ENCODE measurements at regions of chr17 and their contacts with region 1.

Region 1: DNA sequence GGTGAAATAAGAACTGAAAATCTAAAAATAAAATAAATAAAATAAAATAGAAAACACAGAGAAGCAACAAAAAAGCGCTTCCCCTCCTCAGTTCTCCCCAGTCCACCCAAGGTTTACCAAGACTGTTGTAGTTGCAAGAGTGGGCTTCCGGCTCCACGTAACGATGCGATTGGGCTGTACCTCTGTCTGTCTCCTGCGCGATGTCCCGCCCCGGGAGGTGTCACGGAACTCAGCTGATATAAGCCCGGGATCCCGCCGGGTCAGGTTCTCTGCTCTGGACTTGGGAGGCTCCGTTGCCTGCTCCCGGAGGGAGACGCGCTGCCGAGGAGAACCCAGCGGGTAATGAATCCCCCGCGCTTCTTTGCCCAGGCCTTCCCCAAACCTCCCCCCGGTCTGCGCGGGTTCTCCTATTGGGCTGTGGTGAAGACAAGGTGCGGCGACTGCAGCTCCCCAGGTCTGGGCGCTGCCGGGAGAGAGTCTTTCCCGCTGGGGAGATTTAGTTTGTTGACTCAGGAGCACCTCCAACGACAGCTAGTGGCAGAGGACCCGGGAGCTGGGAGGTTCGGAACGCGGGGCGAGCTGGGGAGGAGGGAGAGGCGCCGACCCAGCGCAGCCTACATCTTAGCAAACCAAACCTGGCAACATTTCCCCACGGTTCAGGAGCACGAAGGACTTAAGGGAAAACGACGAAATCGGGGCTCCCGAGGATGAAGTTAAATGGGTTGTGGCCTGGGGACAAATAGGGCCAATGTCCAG is at the start of gene SLFN5:
- DNase-seq: peak; percentile 98
- H3K4me3 Mint-ChIP-seq: peak within 1 kb of the TSS; percentile 93
- H3K27ac Mint-ChIP-seq: peak within 1 kb of the TSS; percentile 95
- H3K4me1 Mint-ChIP-seq: peaks cover 71% of the 10 kb centered on the region
- H3K27me3 Mint-ChIP-seq: no peaks in the 10 kb centered on the region
- total RNA-seq, gene SLFN5: 6.9 and 8.9 TPM in 2 replicates

Region 2: DNA sequence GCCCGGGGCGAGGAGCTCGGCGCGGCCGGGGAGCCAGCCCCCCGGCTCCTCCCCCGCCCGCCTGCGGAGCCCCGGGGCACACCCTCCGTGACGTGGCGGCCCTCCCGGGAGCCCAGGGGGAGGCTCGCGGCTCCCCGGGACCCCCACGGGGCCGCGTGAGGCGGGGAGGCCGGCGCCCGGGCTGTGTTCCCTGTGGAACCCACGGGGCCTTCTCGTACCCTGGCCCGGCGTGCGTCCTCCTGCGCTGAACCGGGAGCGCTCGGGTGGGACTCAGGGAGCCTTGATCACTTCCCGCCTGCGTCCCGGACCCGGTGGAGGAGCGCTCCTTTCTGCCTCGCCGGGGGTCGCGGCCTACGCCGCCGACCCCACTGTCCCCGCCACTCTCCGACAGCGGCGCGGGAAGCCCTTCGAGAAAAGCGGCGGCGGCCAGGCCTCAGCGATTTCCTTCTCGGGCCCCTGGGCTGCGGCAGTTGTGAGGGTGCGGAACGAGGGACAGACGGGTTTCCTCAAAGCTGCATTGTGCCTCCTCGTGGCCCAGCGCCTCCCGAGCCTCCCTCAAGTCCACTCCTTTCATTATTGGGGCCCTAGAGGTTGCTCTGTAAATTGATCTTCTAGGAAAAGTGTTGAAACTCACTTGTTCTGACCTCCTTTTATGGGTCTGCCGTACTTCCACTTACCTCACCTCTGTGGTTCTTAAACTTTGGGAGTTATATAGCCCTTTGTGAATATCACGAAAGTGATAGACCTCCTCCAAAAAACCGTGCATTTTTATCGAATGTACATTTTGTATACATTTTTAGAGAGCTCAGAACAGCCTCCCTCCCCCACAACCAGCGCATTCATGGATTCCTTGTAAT is 262.1 kb before region 1 on chr17:
- intact Hi-C with region 1: loop called (anchors 5 kb)
- DNase-seq: peak; percentile 95
- H3K4me3 Mint-ChIP-seq: peak overlapping the region; percentile 96
- H3K27ac Mint-ChIP-seq: peak overlapping the region; percentile 96
- H3K4me1 Mint-ChIP-seq: peaks cover 47% of the 10 kb centered on the region
- H3K27me3 Mint-ChIP-seq: no peaks in the 10 kb centered on the region

Region 3: GRCh38 chr17:35148144-35148543 is 94.8 kb before region 1 on chr17:
- intact Hi-C with region 1: no loop called
- DNase-seq: no peak
- H3K4me3 Mint-ChIP-seq: no peak overlapping the region
- H3K27ac Mint-ChIP-seq: no peak overlapping the region
- H3K4me1 Mint-ChIP-seq: peaks cover 6% of the 10 kb centered on the region
- H3K27me3 Mint-ChIP-seq: peaks cover 8% of the 10 kb centered on the region

Region 4: GRCh38 chr17:35170968-35171771 is 71.8 kb before region 1 on chr17:
- intact Hi-C with region 1: loop called (anchors 5 kb)
- DNase-seq: peak; percentile 78
- H3K4me3 Mint-ChIP-seq: peak overlapping the region; percentile 19
- H3K27ac Mint-ChIP-seq: no peak overlapping the region
- H3K4me1 Mint-ChIP-seq: peaks cover 27% of the 10 kb centered on the region
- H3K27me3 Mint-ChIP-seq: no peaks in the 10 kb centered on the region

Region 5: GRCh38 chr17:35312790-35313711 is 70.1 kb after region 1 on chr17:
- intact Hi-C with region 1: loop called (anchors 2 kb)
- DNase-seq: peak; percentile 94
- H3K4me3 Mint-ChIP-seq: peak overlapping the region; percentile 85
- H3K27ac Mint-ChIP-seq: peak overlapping the region; percentile 88
- H3K4me1 Mint-ChIP-seq: peaks cover 34% of the 10 kb centered on the region
- H3K27me3 Mint-ChIP-seq: peaks cover 3% of the 10 kb centered on the region

Region 6: GRCh38 chr17:35540589-35541404 is 297.8 kb after region 1 on chr17:
- intact Hi-C with region 1: loop called (anchors 1 kb)
- DNase-seq: peak; percentile 81
- H3K4me3 Mint-ChIP-seq: peak overlapping the region; percentile 90
- H3K27ac Mint-ChIP-seq: peak overlapping the region; percentile 95
- H3K4me1 Mint-ChIP-seq: peaks cover 41% of the 10 kb centered on the region
- H3K27me3 Mint-ChIP-seq: no peaks in the 10 kb centered on the region

Measured in activated CD4-positive, alpha-beta T cell treated with anti-CD3 and anti-CD28 coated beads, Interleukin-2, amount 10 ng/mL, durations not matched to agents 24 days and 14 days (primary cell).